Thyroid gland (tissue), 4 donors: ENCODE measurements at regions of chr1 and their contacts with region 1.

Region 1: DNA sequence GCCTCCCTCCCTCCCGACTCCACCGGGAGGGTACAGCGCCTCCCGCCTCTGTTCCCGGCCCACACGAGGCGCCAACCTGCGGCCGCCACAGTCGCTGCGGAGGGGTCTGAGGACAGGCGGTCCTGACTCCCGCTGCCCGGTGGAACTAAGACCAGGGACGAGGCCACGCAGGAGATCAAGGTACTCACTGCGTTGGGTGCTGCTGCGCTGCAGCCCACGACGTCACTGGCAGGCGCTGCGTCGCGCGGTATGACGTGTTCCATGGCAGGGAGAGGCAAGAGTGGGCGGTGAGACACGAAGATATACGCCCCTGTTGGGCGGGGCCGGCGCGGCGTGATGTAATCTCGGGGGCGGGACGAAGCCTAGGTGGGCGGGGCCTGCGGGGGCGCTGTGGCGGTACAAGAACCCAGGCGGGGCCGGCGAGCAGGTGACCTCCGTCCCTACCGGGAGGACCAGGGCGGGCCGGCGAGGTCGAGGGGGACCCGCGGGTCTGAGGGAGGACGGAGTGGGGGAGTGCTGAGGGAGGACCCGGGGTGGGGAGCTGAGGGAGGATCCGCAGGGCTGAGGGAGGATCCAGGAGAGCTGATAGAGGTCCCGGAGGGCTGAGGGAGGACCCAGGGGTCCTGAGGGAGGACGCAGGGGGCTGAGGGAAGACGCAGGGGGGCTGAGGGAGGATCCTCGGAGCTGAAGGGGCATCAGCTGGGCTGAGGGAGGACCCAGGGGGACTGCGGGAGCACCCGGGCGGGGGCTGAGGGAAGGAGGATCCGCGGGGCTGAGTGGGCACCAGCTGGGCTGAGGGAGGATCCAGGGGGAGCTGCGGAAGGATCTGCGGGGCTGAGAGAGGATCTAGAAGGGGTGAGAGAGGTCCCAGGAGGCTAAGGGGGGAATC is at the start of gene MRPL55:
- DNase-seq: peak; percentile 95 to 97
- H3K4me3 ChIP-seq: peak within 1 kb of the TSS; percentile 57 to 96 (median 66)
- H3K27ac ChIP-seq: peak within 1 kb of the TSS; percentile 80 to 86 (median 83)
- H3K4me1 ChIP-seq: peaks cover 15 to 16% of the 10 kb centered on the region in 2 donors
- H3K27me3 ChIP-seq: no peaks in the 10 kb centered on the region
- CTCF ChIP-seq: peak in 2 of 6 experiments; percentile 6 to 19
- POLR2A ChIP-seq: peak; percentile 82 to 87
- total RNA-seq, gene MRPL55: 23.5 to 125 (median 87.5) TPM

Region 2: GRCh38 chr1:227734856-227735538 is 374.3 kb before region 1 on chr1 and contains the starts of genes JMJD4 and SNAP47:
- intact Hi-C with region 1: loop called (anchors 10 kb)
- DNase-seq: peak; percentile 92 to 93
- H3K4me3 ChIP-seq: peak within 1 kb of the TSS; percentile 84 to 97 (median 89)
- H3K27ac ChIP-seq: peak within 1 kb of the TSS; percentile 69 to 84 (median 80)
- H3K4me1 ChIP-seq: peaks cover 26 to 28% of the 10 kb centered on the region in 2 donors
- H3K27me3 ChIP-seq: no peaks in the 10 kb centered on the region
- CTCF ChIP-seq: peak in 2 of 6 experiments; percentile 10 to 36
- POLR2A ChIP-seq: peak in 1 of 2 donors; percentile 84
- total RNA-seq, gene JMJD4: 20.6 to 31.7 (median 28.8) TPM
- total RNA-seq, gene SNAP47: 50.4 to 72.6 (median 65.0) TPM

Region 3: GRCh38 chr1:228139944-228140656 is 30.8 kb after region 1 on chr1 and contains the start of gene GUK1:
- intact Hi-C with region 1: loop called (anchors 5 kb)
- DNase-seq: peak; percentile 100
- H3K4me3 ChIP-seq: peak within 1 kb of the TSS; percentile 82 to 98 (median 96)
- H3K27ac ChIP-seq: peak within 1 kb of the TSS; percentile 82 to 97 (median 90)
- H3K4me1 ChIP-seq: peaks cover 23 to 36% of the 10 kb centered on the region in 2 donors
- H3K27me3 ChIP-seq: no peaks in the 10 kb centered on the region
- CTCF ChIP-seq: peak in 4 of 6 experiments; percentile 16 to 44 (median 24)
- POLR2A ChIP-seq: peak; percentile 86 to 92
- total RNA-seq, gene GUK1: 157 to 385 (median 283) TPM